Head of caudate nucleus (tissue), 42 donors: ENCODE measurements at regions of chr14 and their contacts with region 1.

Region 1: GRCh38 chr14:32939254-32940065 is 781 bp downstream of the NPAS3 start:
- DNase-seq: peak; percentile 49 to 94 (median 84)

Region 2: GRCh38 chr14:32576088-32576795 is 363.2 kb before region 1 on chr14:
- intact Hi-C with region 1: loop called (anchors 10 kb)
- DNase-seq: peak; percentile 19 to 89 (median 64)

Region 3: GRCh38 chr14:32724867-32725471 is 214.5 kb before region 1 on chr14:
- intact Hi-C with region 1: loop called (anchors 5 kb)
- DNase-seq: peak in 25 of 42 donors; percentile 10 to 70 (median 38)

Region 4: GRCh38 chr14:32986791-32987540 is 47.5 kb after region 1 on chr14:
- intact Hi-C with region 1: loop called (anchors 5 kb)
- DNase-seq: peak; percentile 65 to 93 (median 84)

Region 5: DNA sequence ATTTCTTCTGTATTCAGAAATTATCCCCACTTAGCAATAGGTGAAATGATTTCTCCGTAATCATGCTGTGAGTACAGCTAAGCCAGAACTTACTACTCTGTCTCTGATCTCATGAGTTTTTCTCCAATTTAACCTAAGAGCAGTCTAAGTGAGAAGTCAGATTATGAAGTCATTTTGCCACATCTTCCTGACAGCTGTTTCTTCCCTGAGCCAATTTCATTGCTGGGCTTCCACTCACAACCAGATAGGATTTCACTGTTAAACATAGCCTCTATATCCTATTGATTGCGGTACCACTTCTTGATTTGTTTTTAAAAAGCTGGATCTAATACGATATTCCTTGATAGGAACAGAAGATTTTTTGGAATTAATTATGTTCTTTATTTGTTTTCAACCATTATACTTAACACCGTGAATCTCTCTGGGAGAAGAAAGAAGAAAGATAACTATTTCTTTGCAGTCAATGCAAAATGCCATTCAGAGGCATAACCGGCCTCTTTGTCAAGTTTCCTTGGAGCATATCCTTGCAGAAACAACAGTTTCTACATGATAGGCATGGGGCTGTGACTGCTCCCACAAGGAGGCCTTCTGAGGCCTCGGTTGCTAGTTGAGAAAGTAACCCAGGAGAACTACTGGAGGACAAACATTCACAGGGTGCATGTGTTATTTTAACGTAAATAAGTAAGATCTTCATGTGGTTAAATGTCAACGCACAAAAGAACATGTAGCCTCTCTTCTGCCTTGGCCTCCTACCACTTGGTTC is 211.4 kb after region 1 on chr14:
- intact Hi-C with region 1: no loop called
- DNase-seq: no peak